Activated CD4-positive, alpha-beta T cell treated with anti-CD3 and anti-CD28 coated beads for 36 hours (primary cell): ENCODE measurements at regions of chr18 and their contacts with region 1.

Region 1: DNA sequence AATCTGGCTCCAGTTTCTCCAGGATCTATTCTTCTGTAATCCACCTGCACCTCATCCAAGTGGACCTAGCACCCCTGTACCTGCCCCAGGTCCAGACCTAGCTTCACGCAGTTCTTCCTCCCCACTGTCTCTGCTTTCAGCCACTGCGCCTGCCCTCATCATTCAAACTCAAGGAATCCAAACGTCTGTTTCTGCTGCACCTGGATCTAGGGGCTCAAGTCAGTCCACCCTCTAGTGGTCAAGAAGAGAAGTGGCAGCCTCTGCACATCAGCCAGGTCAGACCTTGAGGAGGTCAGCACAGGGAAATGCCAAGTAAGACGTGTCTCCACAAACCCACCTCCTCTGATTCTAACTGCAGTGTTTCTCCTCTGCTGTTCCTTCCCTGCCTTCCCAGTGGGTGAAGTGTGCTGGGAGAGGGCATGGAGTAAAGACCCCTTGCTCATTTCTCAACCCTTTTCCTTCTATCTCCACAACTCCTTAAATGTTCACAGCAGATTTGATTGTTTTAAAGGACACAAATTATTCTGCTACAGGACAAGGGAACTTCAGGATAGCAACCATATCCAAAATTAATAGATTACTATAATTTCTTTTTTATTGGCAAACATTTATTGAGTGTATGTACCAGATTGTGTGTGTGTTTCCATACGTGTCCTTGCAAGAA is 8.6 kb upstream of the RNF152 start:
- DNase-seq: peak; percentile 51
- ATAC-seq: peak; percentile 84
- H3K4me3 Mint-ChIP-seq: no peak overlapping the region
- H3K27ac Mint-ChIP-seq: no peak overlapping the region
- H3K4me1 Mint-ChIP-seq: no peaks in the 10 kb centered on the region
- H3K27me3 Mint-ChIP-seq: peaks cover 26% of the 10 kb centered on the region

Region 2: DNA sequence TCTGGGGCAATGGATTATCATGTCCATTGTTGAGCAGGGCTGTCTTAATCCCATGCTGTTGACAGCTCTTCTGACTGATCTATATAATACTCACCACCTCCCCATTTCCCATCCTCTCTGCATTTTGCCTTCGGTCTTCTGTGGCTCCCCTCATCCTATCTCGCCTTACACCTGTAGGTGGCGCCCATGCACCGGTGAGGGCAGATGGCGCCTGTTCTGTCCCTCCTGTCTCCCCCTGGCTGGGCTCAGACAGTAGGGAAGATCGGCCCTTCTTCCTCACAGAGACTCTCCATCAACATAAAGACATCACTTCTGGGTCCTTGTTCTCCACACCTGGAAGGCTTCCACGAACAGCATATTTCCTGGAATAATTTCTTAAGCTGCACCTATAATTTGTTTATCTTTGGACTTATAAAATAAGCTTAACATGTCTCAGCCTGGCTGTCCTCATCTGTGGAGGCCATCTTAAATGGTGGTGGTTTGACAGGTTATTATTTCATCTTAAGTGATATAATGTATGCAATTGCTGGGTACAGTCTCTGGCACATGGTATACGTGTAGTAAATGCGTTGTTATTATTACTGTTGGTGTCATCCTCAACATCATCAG is 579.1 kb before region 1 on chr18:
- CTCF ChIA-PET with region 1: no interaction called
- POLR2A ChIA-PET with region 1: no interaction called
- intact Hi-C with region 1: loop called in 1 of 2 experiments (anchors 2 kb)
- DNase-seq: peak; percentile 73
- ATAC-seq: peak; percentile 74
- H3K4me3 Mint-ChIP-seq: no peak overlapping the region
- H3K27ac Mint-ChIP-seq: no peak overlapping the region
- H3K4me1 Mint-ChIP-seq: no peaks in the 10 kb centered on the region
- H3K27me3 Mint-ChIP-seq: no peaks in the 10 kb centered on the region

Region 3: DNA sequence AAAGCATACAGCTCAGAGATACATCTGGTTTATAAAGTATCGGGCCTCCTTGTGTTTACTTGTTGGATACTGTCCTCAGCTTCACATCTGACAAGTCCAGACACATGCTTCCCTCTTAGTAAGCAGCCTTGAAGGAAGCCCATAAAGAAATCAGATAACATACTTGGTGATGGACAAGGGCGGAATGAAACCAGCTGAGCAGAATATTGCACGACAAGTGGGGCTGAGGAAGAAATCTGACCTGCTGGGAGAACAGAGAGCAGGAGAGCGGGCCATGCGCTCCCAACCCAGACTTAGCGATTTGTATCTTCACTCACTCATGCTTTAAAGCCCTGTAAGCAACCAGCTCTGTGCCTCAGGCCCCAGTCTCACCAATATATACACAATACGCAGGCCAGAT is 359.8 kb before region 1 on chr18:
- CTCF ChIA-PET with region 1: no interaction called
- POLR2A ChIA-PET with region 1: no interaction called
- intact Hi-C with region 1: loop called in 1 of 2 experiments (anchors 5 kb)
- DNase-seq: no peak
- ATAC-seq: no peak
- H3K4me3 Mint-ChIP-seq: no peak overlapping the region
- H3K27ac Mint-ChIP-seq: no peak overlapping the region
- H3K4me1 Mint-ChIP-seq: no peaks in the 10 kb centered on the region
- H3K27me3 Mint-ChIP-seq: peaks cover 6% of the 10 kb centered on the region

Region 4: DNA sequence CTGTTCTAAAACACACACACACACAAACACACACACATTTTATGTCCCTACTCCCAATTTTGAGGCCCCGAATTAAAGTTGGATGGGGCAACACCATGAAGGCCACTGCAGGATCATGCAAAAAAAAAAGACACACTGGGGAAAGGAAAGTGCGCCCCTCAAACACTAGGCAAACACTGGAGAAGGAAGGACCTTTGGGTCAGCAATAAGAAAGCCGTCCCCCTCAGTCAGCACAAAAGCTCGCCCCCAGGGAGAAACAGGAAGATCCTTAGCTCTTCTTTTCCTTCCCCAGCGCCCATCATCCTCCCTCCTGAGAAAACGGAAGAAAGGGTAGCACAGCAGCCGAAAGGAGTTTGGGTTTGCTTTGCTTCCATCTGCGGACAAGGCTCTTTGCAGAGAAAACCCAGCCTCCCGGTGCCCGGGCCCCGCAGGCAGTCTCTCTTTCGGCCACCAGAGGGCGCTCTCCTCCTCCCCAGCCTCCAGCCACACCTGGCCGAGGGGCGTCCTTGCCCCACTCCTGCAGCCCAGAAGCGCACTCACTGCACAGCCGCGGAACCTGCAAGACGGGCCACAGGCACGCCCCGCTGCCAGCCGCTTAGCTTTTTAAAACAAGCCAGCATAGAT is 319.8 kb before region 1 on chr18:
- CTCF ChIA-PET with region 1: no interaction called
- POLR2A ChIA-PET with region 1: no interaction called
- intact Hi-C with region 1: loop called in 1 of 2 experiments (anchors 1 kb)
- DNase-seq: peak; percentile 80
- ATAC-seq: peak; percentile 78
- H3K4me3 Mint-ChIP-seq: no peak overlapping the region
- H3K27ac Mint-ChIP-seq: no peak overlapping the region
- H3K4me1 Mint-ChIP-seq: peaks cover 6% of the 10 kb centered on the region
- H3K27me3 Mint-ChIP-seq: peaks cover 31% of the 10 kb centered on the region

Region 5: DNA sequence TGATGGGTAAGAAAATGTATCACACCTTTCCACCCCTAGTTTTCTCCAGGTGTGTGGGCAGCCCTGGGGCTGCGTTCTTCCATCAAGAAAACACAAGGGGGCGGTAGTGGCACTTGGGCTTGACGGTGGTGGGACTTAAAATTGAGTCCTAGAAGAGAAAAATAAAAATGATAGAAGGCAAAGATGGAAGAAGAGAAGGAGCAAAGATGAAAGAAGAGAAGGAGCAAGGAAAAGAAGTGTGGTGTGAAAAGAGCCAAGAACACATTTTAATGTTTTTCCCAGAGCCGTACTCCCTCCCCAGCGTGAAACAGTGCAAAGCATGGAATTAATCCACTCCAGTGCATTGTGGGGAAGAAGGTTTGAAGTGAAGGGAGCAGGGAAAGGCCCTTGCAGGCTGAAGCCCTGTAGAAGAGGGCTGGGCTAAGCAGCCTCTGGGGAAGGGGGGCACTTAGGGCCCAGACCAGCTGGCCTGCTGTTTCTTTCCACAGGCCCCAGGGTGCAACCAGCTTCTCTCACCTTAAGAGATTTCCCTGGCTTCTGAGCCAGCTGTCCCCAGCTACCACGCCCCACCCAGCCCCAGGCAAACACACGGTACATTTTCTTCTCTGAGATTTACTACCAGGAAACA is 265.4 kb before region 1 on chr18:
- CTCF ChIA-PET with region 1: interaction called, 3 read pairs
- POLR2A ChIA-PET with region 1: interaction called, 6 read pairs
- intact Hi-C with region 1: loop called (anchors 1 to 10 kb)
- DNase-seq: peak; percentile 65
- ATAC-seq: peak; percentile 60
- H3K4me3 Mint-ChIP-seq: no peak overlapping the region
- H3K27ac Mint-ChIP-seq: no peak overlapping the region
- H3K4me1 Mint-ChIP-seq: no peaks in the 10 kb centered on the region
- H3K27me3 Mint-ChIP-seq: peaks cover 8% of the 10 kb centered on the region

Region 6: GRCh38 chr18:61702007-61702406 is 199.4 kb before region 1 on chr18:
- CTCF ChIA-PET with region 1: no interaction called
- POLR2A ChIA-PET with region 1: no interaction called
- intact Hi-C with region 1: no loop called
- DNase-seq: no peak
- ATAC-seq: no peak
- H3K4me3 Mint-ChIP-seq: no peak overlapping the region
- H3K27ac Mint-ChIP-seq: no peak overlapping the region
- H3K4me1 Mint-ChIP-seq: no peaks in the 10 kb centered on the region
- H3K27me3 Mint-ChIP-seq: peaks cover 4% of the 10 kb centered on the region

Region 7: DNA sequence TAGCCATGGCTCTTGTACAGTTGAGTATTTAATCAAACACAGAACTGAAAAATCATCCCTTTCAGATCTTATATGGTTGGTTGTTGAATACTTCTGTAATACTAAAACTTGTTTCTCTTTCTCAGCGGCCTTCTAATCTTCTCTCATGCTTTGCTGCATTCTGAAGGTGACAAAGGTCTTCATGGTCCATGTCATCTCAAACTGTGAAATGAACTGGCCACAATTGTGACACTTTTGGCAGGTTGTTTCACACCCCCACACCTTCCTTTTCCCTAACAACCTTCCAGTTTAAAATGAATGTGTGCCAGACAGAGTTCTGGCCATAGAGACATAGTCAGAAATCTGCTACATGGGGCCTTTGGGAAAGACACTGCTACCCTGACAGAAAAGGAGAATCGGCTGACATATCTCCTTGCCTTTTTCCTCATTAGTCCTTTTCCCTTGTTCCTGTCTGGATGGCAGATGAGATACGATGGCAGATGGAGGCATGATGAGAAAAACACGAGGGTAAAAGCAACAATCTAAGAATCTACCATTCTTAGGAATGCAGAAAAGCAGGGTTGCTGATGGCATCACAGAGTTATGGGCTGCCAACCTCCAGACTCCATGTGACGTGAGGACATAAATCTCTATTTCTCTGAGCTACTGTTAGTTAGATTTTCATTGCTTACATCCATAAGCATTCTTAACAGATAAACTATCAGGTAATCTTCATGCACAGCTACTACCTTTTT is 178.9 kb after region 1 on chr18:
- CTCF ChIA-PET with region 1: no interaction called
- POLR2A ChIA-PET with region 1: no interaction called
- intact Hi-C with region 1: no loop called
- DNase-seq: no peak
- ATAC-seq: no peak
- H3K4me3 Mint-ChIP-seq: no peak overlapping the region
- H3K27ac Mint-ChIP-seq: no peak overlapping the region
- H3K4me1 Mint-ChIP-seq: peaks cover 5% of the 10 kb centered on the region
- H3K27me3 Mint-ChIP-seq: no peaks in the 10 kb centered on the region